HepG2 (cell line): ENCODE measurements at regions of chr11 and their contacts with region 1.

Region 1: GRCh38 chr11:9158898-9159391 is 67.5 kb upstream of the SCUBE2 start:
- DNase-seq: no peak
- ATAC-seq: no peak
- H3K4me3 ChIP-seq: no peak overlapping the region
- H3K27ac ChIP-seq: no peak overlapping the region
- H3K4me1 ChIP-seq: no peaks in the 10 kb centered on the region
- H3K27me3 ChIP-seq: no peaks in the 10 kb centered on the region
- CTCF ChIP-seq: no peak
- EP300 ChIP-seq: no peak
- POLR2A ChIP-seq: no peak
- RAD21 ChIP-seq: no peak

Region 2: GRCh38 chr11:8717876-8718753 is 440.8 kb before region 1 on chr11:
- CTCF ChIA-PET with region 1: no interaction called
- POLR2A ChIA-PET with region 1: no interaction called
- in situ Hi-C with region 1: no loop called
- intact Hi-C with region 1: no loop called
- DNase-seq: peak; percentile 83
- ATAC-seq: peak; percentile 64
- H3K4me3 ChIP-seq: peak overlapping the region in 1 of 3 experiments; percentile 29; a peak in 2 of 6 replicates
- H3K27ac ChIP-seq: peak overlapping the region; percentile 86
- H3K4me1 ChIP-seq: peaks cover 98% of the 10 kb centered on the region
- H3K27me3 ChIP-seq: no peaks in the 10 kb centered on the region
- CTCF ChIP-seq: no peak
- EP300 ChIP-seq: peak in 1 of 2 experiments; percentile 23; a peak in 1 of 4 replicates
- POLR2A ChIP-seq: peak in 1 of 2 experiments; percentile 39; a peak in 1 of 4 replicates
- RAD21 ChIP-seq: no peak

Region 3: DNA sequence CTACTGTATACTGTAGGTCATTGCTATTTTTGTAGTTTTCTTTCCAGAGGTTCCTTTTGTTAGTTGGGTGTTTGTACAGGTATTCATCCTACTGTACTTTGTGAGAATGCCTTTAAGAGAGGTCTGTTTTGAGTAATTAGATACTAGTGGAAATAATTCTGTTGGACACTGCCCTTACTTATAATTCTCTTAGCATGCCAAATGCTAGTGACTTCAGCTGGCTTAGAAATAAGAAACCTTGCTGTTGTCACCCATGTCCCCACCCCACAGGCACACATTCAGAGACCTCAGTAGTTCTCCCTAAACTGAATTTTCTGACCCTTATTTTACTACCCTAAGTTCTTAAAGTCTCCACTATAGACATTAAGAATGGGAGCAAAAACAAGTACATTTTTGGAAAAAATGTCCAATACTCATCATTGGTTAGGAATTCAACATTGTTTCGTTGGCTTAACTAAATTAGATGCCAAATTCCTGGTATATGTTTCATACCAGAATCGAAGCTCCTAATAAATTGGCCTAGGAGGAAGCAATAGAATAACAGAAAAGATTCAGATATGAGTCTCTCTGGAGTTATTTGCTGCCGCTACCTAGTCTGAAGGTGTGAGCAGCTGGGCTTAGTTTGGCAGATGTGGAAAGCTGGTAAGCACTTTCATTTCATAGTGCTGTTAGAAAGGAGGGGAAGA is 330.3 kb after region 1 on chr11:
- CTCF ChIA-PET with region 1: no interaction called
- POLR2A ChIA-PET with region 1: no interaction called
- in situ Hi-C with region 1: loop called (anchors 25 kb)
- intact Hi-C with region 1: no loop called
- DNase-seq: no peak
- ATAC-seq: no peak
- H3K4me3 ChIP-seq: no peak overlapping the region
- H3K27ac ChIP-seq: no peak overlapping the region
- H3K4me1 ChIP-seq: no peaks in the 10 kb centered on the region
- H3K27me3 ChIP-seq: no peaks in the 10 kb centered on the region
- CTCF ChIP-seq: no peak
- EP300 ChIP-seq: no peak
- POLR2A ChIP-seq: no peak
- RAD21 ChIP-seq: no peak